Ascending aorta (tissue), 2 donors: ENCODE measurements at regions of chr11 and their contacts with region 1.

Region 1: GRCh38 chr11:63023841-63024648 is 8.4 kb upstream of the SLC22A8 start:
- DNase-seq: peak; percentile 54 to 93
- H3K4me3 ChIP-seq: no peak overlapping the region
- H3K27ac ChIP-seq: no peak overlapping the region
- H3K4me1 ChIP-seq: peaks cover 0 to 4% of the 10 kb centered on the region in 2 donors
- H3K27me3 ChIP-seq: no peaks in the 10 kb centered on the region
- CTCF ChIP-seq: peak; percentile 94 to 100 (median 99)

Region 2: GRCh38 chr11:62905927-62906531 is 118.0 kb before region 1 on chr11:
- intact Hi-C with region 1: loop called (anchors 1 kb)
- DNase-seq: peak; percentile 23 to 88
- H3K4me3 ChIP-seq: no peak overlapping the region
- H3K27ac ChIP-seq: no peak overlapping the region
- H3K4me1 ChIP-seq: peaks cover 0 to 6% of the 10 kb centered on the region in 2 donors
- H3K27me3 ChIP-seq: no peaks in the 10 kb centered on the region
- CTCF ChIP-seq: peak; percentile 96 to 99 (median 98)